ENCODE measurements at regions of chr13 and their contacts with region 1.

Region 1: DNA sequence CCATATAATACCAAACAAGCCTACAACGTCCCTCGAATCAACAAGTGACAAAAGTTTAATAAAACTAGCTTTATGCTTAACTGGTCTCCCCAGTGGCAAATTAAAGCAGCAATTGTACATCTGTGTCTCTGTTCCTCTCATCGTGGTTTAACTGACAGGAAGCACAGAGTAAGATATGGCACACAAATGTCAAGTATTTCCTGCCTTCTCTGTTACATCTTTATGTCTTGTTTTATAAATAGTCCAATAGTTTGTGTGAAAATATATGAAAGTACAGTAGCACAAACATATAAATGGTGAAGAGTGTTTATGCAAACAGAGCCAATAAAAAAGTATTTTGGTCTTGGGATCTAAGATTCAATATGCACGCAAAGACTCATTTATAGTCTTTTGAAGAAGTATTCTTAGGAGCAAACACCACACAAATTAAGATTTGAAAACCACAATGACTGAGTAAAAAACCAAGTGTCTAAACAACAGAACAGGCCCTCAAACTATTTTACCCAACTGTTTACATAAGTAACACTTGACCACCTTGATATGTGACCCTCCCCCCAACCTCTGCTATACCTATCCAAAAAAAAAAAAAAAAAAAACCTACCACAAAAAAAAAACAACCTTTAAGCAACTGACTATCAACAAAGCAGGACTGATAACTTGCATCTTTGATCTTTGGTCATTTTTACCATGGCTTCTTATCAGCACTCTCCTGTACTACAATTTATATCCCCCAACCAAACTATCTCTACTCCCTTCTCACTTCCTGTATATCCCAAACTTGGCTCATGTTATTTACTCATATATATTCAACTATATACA is 14.0 kb downstream of the ELF1 start:
- DNase-seq: peak; percentile 61
- ATAC-seq: peak; percentile 85
- H3K4me3 Mint-ChIP-seq: peak overlapping the region; percentile 54
- H3K27ac Mint-ChIP-seq: peak overlapping the region; percentile 87
- H3K4me1 Mint-ChIP-seq: peaks cover 68% of the 10 kb centered on the region
- H3K27me3 Mint-ChIP-seq: no peaks in the 10 kb centered on the region

Region 2: DNA sequence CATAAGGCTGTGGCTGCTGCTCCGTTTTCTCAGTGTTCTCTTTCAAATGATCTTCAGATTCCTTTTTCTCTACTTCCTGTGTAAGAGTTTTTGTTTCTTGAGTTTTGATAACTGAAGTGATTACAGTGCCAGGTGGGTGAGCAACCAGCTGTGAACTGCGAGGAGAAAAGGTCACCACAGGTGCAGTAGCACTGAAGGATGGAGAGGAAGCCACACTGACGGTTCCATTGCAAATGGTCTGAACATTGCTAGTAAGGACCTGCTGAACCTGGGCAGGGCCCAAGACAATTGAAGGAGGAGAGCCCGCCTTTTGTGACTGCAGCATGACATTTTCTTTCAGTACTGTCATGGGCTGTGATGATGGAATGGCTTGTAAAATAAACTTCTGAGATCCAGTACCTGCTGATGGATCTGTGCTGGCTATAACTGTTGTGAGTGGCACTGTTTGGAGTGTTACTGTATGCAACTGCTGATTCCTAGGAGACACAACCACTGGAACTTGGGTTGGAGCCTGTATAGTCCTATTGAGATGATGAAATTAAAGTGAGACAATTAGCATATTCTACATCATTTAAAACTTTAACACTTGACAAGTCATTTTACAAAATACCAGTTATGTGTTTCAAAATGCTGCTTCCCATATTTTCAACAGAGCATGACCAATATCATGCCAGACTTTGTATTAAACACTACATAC is 71.4 kb before region 1 on chr13:
- CTCF ChIA-PET with region 1: no interaction called
- POLR2A ChIA-PET with region 1: no interaction called
- DNase-seq: no peak
- ATAC-seq: peak; percentile 34
- H3K4me3 Mint-ChIP-seq: no peak overlapping the region
- H3K27ac Mint-ChIP-seq: peak overlapping the region; percentile 48
- H3K4me1 Mint-ChIP-seq: peaks cover 13% of the 10 kb centered on the region
- H3K27me3 Mint-ChIP-seq: no peaks in the 10 kb centered on the region

Region 3: GRCh38 chr13:40992678-40993518 is 12.2 kb before region 1 on chr13:
- CTCF ChIA-PET with region 1: interaction called, 22 read pairs
- POLR2A ChIA-PET with region 1: interaction called, 4 read pairs
- DNase-seq: no peak
- ATAC-seq: no peak
- H3K4me3 Mint-ChIP-seq: peak overlapping the region; percentile 8
- H3K27ac Mint-ChIP-seq: peak overlapping the region; percentile 87
- H3K4me1 Mint-ChIP-seq: peaks cover 78% of the 10 kb centered on the region
- H3K27me3 Mint-ChIP-seq: no peaks in the 10 kb centered on the region